BJ (cell line): ENCODE measurements at regions of chr1 and their contacts with region 1.

Region 1: GRCh38 chr1:27952147-27952546 is 7.6 kb upstream of the XKR8 start:
- DNase-seq: no peak
- H3K4me3 ChIP-seq: no peak overlapping the region
- H3K27me3 ChIP-seq: peaks cover 5% of the 10 kb centered on the region; the same call in 1 of the 2 replicates
- CTCF ChIP-seq: no peak

Region 2: DNA sequence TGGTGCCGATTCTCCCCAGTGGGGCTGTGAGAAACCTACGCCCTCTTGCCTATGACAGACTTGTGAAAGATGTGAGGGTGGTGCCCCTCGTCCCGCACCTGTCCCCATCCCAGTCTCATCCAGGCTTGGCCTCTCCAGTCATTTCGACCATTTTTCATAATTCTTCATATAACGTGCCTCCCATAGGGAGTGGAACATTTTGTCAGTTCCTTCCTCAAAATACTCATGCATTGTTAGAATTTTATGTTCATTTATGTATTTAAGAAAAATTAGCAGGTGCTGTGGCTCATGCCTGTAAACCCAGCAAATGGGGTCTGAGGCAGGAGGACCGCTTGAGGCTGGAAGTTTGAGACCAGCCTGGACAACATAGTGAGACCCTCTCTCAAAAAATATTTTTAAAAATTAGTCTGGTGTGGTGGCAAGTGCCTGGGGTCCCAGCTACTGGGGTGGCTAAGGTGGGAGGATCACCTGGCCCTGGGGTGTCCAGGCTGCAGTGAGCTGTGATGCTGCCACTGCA is 37.0 kb before region 1 on chr1:
- CTCF ChIA-PET with region 1: no interaction called
- POLR2A ChIA-PET with region 1: no interaction called
- DNase-seq: no peak
- H3K4me3 ChIP-seq: peak overlapping the region; percentile 17; the same call in 1 of the 2 replicates
- H3K27me3 ChIP-seq: no peaks in the 10 kb centered on the region
- CTCF ChIP-seq: no peak

Region 3: DNA sequence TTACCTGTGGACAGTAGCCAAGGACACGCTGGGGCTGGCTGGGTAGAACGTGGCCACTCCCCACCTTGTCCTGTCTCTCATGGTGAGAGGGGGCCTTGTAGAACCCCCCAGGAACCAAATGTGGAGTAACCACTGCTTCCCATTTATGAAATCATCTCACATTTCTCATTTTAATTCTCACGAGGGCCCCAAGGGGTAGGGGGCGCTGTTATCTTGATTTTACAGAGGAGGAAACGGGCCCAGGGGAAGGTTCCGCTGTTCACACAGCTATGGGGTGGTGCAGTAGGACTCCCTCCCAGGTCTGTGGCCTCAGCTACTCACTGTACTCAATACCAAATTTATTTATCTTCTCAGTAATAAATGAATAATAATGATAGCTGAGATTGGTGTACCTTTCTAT is 11.8 kb before region 1 on chr1:
- CTCF ChIA-PET with region 1: interaction called, 10 read pairs
- POLR2A ChIA-PET with region 1: no interaction called
- DNase-seq: no peak
- H3K4me3 ChIP-seq: no peak overlapping the region
- H3K27me3 ChIP-seq: peaks cover 3% of the 10 kb centered on the region; the same call in 1 of the 2 replicates
- CTCF ChIP-seq: peak; percentile 37